ENCODE measurements at regions of chr6 and their contacts with region 1.

Region 1: DNA sequence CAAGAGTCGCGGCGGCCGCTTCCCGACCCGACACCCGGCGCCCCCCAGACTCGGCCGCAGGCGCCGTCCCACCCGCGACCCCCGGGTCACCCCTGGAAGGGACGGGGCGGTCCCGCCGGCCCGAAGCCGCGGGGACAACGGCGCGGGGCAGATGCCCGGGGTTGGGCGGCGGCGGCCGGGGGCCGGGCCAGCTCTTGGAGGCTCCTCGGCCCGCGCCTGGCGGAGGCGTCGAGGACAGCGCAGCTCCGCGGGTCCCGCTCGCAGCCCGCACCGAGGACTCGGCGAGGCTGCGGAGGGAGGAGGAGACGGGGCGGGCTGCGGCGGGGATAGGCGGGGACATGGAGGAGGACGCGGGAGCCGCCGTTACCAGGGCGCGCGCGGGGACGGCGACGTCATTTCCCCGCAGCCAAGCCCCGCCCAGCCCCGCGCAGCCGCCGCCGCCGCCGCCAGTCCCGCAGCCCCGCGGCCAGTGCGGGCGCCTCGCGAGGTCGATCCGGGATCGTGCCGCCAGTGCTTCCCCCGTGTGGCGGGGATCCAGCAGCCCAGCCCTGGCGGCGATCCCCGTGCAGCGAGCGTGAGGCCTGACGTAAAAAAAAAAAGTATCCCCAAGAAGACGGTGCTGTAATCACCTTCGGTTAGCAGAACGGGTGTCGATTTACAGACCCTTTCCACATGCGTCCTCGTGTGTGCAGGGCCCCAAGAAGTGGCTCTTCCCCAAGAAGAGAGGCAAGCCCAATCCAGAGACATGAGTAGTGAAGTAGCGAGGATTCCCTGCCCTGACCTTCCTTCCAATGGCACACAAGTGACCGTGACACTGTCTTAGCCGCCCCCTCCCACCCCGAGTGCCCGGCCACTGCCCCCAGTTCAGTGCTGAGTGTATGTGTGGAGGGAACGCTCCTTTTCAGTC is at the start of gene FAM184A:
- DNase-seq: peak; percentile 67
- H3K4me3 Mint-ChIP-seq: peak within 1 kb of the TSS; percentile 89
- H3K27ac Mint-ChIP-seq: peak within 1 kb of the TSS; percentile 69
- H3K4me1 Mint-ChIP-seq: peaks cover 28% of the 10 kb centered on the region
- H3K27me3 Mint-ChIP-seq: peaks cover 8% of the 10 kb centered on the region
- total RNA-seq, gene FAM184A: 2.6 and 2.9 TPM in 2 replicates

Region 2: DNA sequence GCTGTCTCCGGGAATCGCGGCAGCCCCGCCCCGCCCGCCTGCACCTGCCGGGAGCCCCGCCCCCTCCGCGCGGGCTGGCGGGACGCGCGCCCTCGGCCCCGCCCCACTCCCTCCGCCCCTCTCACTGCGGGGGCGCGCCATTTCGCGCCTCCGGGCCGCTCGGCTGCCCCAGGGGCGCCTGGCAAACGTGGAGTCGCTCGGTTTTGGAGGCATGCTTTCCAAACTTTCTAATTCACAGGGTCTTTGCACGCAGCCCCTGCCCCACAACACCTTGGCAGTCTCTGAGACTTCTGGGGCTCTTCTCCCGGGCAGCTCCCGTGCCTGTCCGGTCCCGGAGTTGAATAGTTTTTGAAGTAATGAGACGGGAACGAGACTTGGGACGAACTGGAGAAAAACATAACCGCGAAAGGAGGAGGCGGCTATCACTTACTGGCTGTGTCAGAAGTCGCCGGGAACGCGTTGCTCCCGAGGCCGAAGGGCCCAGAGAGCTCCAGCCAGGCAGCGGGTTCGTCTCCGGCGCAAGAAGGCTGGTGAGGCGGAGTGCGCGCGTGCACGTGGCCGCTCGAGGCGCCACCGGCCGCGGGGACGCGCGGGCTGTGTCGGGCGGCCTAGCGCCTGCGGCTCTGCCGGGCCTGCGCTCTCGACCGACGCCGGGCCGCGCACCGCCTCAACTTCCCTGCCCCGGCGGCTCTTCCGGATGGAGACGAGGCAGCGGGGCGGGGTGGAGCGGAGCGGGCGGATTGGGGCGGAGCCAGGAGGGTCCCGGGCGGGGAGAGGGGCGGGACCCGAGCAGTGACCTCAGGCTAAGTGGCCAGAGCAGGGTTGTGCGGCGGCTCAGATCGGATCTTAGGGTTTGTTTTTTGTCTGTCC is 143.9 kb before region 1 on chr6 and contains the start of gene MCM9:
- intact Hi-C with region 1: loop called (anchors 1 kb)
- DNase-seq: peak; percentile 84
- H3K4me3 Mint-ChIP-seq: peak within 1 kb of the TSS; percentile 89
- H3K27ac Mint-ChIP-seq: peak within 1 kb of the TSS; percentile 96
- H3K4me1 Mint-ChIP-seq: peaks cover 29% of the 10 kb centered on the region
- H3K27me3 Mint-ChIP-seq: no peaks in the 10 kb centered on the region
- total RNA-seq, gene MCM9: 18.6 and 21.1 TPM in 2 replicates

Region 3: GRCh38 chr6:119043783-119044182 is 34.8 kb before region 1 on chr6:
- intact Hi-C with region 1: loop called (anchors 5 kb)
- DNase-seq: no peak
- H3K4me3 Mint-ChIP-seq: no peak overlapping the region
- H3K27ac Mint-ChIP-seq: no peak overlapping the region
- H3K4me1 Mint-ChIP-seq: peaks cover 11% of the 10 kb centered on the region
- H3K27me3 Mint-ChIP-seq: peaks cover 3% of the 10 kb centered on the region

Region 4: DNA sequence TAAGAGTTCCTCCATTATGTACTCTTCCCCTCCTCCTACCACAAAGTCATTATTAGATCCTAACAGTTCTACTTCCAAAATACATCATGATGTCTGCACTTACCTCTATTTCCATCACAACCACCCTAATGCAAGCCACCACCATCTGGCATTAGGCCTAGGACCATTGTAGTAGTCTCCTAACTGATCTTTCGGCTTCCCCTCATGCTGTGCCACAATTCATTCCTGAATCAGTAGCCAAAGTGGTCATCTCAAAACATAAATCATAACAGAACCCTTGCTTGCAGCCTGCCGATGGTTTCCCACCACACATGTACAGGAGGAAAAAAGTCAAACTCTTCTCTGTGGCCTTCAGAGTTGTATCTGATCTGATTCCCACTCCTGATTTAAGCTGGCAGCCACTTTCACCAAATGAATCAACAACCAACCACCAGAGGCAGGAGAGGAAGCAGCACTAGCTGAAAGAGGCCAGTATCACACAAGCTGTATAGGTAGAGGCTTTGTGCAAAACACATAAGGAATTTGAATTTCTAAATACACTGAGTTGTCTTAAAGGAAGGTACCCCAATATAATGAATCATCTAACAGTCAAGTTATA is 26.2 kb before region 1 on chr6:
- intact Hi-C with region 1: loop called (anchors 1 kb)
- DNase-seq: peak; percentile 20
- H3K4me3 Mint-ChIP-seq: no peak overlapping the region
- H3K27ac Mint-ChIP-seq: peak overlapping the region; percentile 36
- H3K4me1 Mint-ChIP-seq: peaks cover 23% of the 10 kb centered on the region
- H3K27me3 Mint-ChIP-seq: no peaks in the 10 kb centered on the region

Measured in activated T-helper 2 cell treated with anti-CD3 and anti-CD28 coated beads, Interferon-gamma antibody, Interleukin-2, Interleukin-4, amounts not matched to agents 10 μg/mL and 5 μg/mL and 100 μg/mL, durations not matched to agents 14 hours and 24 hours and 36 hours (primary cell).